Testis (tissue), 5 donors: ENCODE measurements at regions of chr12 and their contacts with region 1.

Region 1: DNA sequence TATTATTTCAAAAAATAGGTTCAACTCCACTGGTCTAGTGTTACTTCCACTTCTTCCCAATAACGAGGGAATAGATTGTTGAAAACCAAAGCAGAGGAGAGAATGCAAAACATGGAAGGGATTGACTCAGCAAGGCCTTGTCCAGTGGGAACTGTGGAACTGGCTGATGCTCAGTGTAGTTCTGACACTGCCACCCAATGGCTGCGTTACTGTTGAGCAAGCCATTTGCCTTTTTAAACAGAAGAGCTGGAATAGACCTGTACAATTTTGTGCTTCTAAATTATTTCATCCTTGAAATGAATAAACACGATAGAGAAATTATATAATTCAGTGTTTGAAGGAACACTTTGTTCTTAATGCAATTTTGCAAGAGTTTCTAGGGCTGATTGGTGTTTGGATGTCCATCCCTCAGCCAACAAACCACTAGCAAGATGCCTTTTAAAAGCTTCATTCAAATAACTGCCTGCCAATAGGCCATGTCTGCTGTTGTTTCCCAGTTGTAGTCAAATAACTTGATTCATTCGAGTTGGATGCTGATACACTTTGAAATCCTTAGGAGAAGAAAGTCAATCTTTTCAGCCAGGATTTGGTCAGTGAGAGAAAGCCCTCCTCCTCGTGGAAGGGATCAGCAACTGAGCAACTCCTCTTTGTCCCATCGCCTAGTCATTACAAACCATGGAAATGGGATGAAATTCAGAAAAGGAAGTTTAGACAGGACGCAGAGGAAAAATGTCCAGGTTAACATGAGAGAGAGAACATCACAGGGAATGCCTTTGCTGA is 7.3 kb upstream of the MGP start:
- DNase-seq: peak; percentile 81
- H3K4me3 ChIP-seq: no peak overlapping the region
- H3K27ac ChIP-seq: peak overlapping the region; percentile 56 to 75
- H3K4me1 ChIP-seq: peaks cover 10% of the 10 kb centered on the region
- H3K27me3 ChIP-seq: no peaks in the 10 kb centered on the region
- CTCF ChIP-seq: no peak
- POLR2A ChIP-seq: no peak

Region 2: DNA sequence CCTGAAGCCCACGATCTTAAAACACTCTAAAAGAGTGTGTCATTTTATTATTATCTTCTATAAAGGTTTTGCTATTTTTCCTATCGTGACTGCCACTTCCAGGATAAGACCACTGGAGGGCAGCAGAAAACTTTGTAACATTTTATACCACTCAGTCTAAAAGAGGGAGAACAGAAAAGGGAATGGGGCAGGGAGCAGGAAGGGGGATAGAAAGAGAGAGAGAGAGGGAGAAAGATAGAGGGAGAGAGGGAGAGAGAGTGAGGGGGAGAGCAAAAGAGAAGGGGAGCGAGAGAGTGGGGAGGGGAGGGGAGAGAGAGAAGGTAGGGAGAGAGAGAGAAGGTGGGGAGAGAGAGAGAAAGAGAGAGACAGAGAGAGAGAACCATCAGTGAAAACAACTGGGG is 47.6 kb before region 1 on chr12:
- intact Hi-C with region 1: loop called (anchors 10 kb)
- DNase-seq: peak; percentile 63
- H3K4me3 ChIP-seq: no peak overlapping the region
- H3K27ac ChIP-seq: peak overlapping the region in 1 of 2 donors; percentile 70
- H3K4me1 ChIP-seq: peaks cover 22% of the 10 kb centered on the region
- H3K27me3 ChIP-seq: no peaks in the 10 kb centered on the region
- CTCF ChIP-seq: peak; percentile 68 to 82 (median 77)
- POLR2A ChIP-seq: no peak

Region 3: DNA sequence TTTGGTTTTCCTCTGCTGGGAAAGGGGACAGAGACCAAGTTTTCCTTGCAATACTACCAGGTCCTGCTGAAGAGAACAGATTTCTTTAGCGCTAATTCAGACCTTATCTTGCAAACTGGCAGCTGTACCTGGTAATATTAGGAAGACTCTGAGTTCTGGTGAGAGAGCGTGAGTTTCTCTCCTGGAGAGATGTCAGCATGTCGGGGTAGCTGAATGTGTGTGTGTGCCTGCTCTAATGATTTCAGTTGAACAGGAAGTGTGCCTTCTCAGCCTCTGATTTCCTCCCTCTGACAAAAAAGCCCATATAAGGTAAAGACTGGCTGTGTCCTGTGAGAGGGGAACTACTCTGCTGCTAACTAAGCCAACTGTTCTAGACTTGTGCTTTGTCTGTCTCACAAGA is 55.8 kb after region 1 on chr12:
- intact Hi-C with region 1: loop called (anchors 10 kb)
- DNase-seq: peak; percentile 54
- H3K4me3 ChIP-seq: no peak overlapping the region
- H3K27ac ChIP-seq: peak overlapping the region; percentile 81 to 82
- H3K4me1 ChIP-seq: peaks cover 26% of the 10 kb centered on the region
- H3K27me3 ChIP-seq: no peaks in the 10 kb centered on the region
- CTCF ChIP-seq: no peak
- POLR2A ChIP-seq: peak; percentile 48